PC-9 (cell line): ENCODE measurements at regions of chr1 and their contacts with region 1.

Region 1: DNA sequence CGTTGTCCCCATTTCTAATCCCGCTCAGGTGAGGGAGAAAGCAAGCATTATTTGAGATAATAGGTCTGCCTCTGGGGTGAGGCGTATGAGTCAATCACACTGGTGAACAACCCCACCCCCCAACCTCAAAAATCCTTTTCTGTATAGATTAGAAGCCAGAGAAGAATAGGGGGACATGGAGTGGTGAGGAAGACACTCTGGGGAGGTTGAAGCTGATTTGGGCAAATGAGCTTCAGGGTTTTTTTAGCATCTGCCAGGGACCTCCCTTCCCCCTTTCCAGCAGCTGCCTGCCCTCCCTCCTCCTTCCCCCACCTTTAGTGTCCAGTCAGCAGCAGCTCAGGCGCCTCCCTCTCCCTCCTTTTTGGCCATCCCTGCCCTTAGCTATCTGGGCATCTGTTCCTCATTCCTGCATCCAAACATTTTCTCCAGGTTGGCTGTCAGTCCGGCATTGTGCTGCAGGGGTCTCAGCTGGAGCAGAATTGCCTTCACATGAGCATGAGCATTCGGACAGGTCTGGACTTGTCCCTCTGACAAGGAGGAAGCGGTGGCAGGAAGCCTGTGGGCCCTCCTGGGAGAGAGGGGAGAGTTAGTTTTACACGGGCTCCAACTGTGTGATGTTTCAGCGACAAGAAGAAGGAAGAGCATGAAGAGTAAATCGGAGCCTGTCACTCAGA is 30.8 kb upstream of the PTGFRN start:
- DNase-seq: peak; percentile 33 to 69
- H3K4me3 ChIP-seq: peak overlapping the region; percentile 45; the same call in 1 of the 2 replicates
- H3K27ac ChIP-seq: no peak overlapping the region
- H3K4me1 ChIP-seq: peaks cover 21% of the 10 kb centered on the region
- H3K27me3 ChIP-seq: no peaks in the 10 kb centered on the region
- CTCF ChIP-seq: no peak

Region 2: GRCh38 chr1:117036018-117036461 is 157.1 kb after region 1 on chr1:
- CTCF ChIA-PET with region 1: no interaction called
- POLR2A ChIA-PET with region 1: interaction called, 10 read pairs
- intact Hi-C with region 1: no loop called
- DNase-seq: no peak
- H3K4me3 ChIP-seq: no peak overlapping the region
- H3K27ac ChIP-seq: no peak overlapping the region
- H3K4me1 ChIP-seq: no peaks in the 10 kb centered on the region
- H3K27me3 ChIP-seq: no peaks in the 10 kb centered on the region
- CTCF ChIP-seq: no peak